ENCODE measurements at regions of chr9 and their contacts with region 1.

Region 1: DNA sequence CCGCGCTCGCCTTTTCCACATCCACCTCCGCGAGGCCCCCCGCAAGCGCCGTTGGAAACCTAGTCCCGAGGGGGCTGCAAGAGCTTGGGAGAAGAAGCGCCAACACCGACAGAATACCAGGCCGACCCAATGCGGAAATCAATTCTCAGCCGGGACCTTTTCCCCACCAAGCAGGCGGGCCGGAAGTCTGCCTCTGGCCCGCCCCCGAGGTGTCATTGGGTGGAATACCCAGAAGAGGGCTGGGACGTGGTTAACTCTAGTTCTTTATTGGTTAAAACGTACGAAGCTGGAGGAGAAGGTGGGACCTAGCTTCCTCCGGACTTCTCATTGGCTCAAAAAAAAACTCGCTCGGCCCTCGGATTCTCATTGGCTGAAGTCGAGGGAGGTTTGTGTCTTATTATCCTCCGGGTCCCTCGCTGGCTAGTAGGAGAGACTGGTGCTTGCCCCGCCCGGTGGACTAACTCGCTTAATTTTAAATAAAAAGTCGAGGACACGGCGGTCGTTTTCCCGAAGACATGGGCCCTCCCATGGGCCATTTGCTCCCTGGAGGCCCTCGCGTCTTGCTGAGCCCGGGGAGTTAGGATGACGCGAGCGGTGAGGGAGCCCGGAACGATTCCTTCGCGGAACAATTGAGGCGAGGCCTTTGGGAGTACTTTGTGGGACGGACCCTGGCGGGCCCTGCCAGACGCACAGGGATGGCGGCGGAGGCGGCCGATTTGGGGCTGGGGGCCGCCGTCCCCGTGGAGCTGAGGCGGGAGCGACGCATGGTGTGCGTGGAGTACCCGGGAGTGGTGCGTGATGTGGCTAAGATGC is at the start of gene GTF3C5:
- DNase-seq: peak; percentile 89 to 96
- ATAC-seq: peak; percentile 98 to 99 (median 99)
- H3K4me3 ChIP-seq: peak within 1 kb of the TSS; percentile 67 to 99 (median 82)
- H3K27ac ChIP-seq: peak within 1 kb of the TSS; percentile 39 to 96 (median 90)
- H3K4me1 ChIP-seq: peaks cover 9 to 41% (median 29%) of the 10 kb centered on the region in 9 donors
- H3K27me3 ChIP-seq: no peaks in the 10 kb centered on the region
- CTCF ChIP-seq: peak in 3 of 9 donors; percentile 5 to 18 (median 9)
- total RNA-seq, gene GTF3C5: 29.4 to 44.4 (median 35.2) TPM

Region 2: GRCh38 chr9:132908635-132909034 is 121.9 kb before region 1 on chr9:
- intact Hi-C with region 1: no loop called
- DNase-seq: no peak
- ATAC-seq: no peak
- H3K4me3 ChIP-seq: no peak overlapping the region
- H3K27ac ChIP-seq: no peak overlapping the region
- H3K4me1 ChIP-seq: no peaks in the 10 kb centered on the region
- H3K27me3 ChIP-seq: no peaks in the 10 kb centered on the region
- CTCF ChIP-seq: no peak

Region 3: GRCh38 chr9:133335878-133336811 is 305.6 kb after region 1 on chr9 and contains the start of gene SURF6:
- intact Hi-C with region 1: loop called in 1 of 10 experiments (anchors 10 kb)
- DNase-seq: peak; percentile 91
- ATAC-seq: peak; percentile 94 to 96 (median 96)
- H3K4me3 ChIP-seq: peak within 1 kb of the TSS; percentile 69 to 95 (median 82)
- H3K27ac ChIP-seq: peak within 1 kb of the TSS in 9 of 10 donors; percentile 63 to 85 (median 82)
- H3K4me1 ChIP-seq: peaks cover 4 to 56% (median 23%) of the 10 kb centered on the region in 9 donors
- H3K27me3 ChIP-seq: no peaks in the 10 kb centered on the region
- CTCF ChIP-seq: no peak
- total RNA-seq, gene SURF6: 9.1 to 14.2 (median 11.3) TPM

Measured in heart right ventricle (tissue), 16 donors.